ENCODE measurements at regions of chr15 and their contacts with region 1.

Region 1: DNA sequence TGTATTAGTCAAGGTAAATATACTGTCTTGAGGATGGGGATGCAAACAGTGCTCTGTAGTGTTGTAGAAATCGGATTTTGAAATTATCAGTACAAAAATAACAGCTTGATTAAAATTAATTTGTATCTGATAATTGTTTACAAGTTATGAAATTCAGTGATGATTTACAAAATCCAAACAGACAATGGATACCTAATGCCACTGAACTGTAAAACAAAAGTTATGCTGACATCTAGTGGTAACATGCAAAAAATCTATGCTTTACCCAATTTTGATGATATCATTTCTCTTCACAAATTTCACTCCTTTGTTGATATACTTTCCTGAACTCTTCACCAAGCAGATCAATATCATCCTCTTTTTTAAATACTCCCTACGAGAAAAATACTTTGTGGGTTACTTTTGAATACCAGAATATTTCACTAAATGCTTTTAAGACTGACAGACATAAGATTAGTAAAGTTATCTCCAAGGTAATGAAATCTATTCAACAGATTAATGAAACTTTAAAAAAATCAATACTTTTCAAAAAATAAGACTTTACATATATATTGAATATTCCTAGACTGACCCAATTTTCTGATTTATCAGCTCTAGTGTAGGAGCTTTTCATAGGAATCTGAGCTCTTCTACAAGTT is 36.0 kb downstream of the MNS1 start:
- DNase-seq: peak; percentile 21
- H3K4me3 ChIP-seq: no peak overlapping the region; a peak in 1 of 4 replicates
- H3K27ac ChIP-seq: no peak overlapping the region
- H3K4me1 ChIP-seq: no peaks in the 10 kb centered on the region
- H3K27me3 ChIP-seq: no peaks in the 10 kb centered on the region
- CTCF ChIP-seq: peak; percentile 70
- EP300 ChIP-seq: no peak
- RAD21 ChIP-seq: peak; percentile 84

Region 2: DNA sequence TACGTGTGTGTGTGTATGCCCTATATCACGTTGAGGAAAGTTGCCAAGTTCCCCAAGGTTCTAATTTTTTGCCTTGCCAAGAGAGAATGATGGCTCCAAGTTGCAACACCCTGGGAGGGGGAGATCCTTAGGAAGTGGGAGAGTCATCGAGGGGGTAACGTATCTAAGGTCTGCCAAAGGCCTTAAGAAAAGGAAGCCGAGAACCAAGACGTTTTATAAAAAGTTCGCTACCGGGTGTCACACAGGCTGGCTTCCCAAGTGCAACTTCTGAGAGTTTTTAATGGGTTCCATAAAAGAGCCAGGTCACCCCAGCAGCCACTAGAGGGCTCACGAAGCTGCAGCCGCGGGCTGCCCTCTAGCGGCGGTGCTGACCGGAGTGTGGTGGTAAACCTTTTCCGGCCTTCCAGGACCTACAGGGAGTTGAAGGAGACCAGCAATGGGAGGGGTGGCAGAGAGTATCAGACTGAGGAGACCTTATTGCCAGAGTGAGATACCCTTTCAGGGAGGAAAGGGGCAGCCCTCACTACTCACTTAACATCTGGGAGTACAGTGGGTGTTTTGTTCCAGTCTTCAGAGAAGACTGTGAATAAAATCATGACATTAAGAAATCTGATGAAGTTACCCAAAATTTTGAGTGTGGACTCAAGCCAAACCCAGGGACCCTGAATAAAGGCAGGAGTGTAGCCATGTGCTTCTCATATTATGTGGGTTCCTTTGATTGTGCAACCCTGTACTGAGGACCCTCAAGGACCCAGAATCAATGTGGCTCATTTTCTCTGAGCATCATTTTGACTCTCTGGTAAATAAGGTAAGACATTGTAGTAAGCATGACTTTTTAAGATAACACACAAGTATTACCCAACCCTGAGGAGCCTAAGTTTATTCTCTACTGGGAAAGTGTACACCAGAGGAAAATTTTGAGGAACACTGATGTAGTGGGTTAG is 182.8 kb before region 1 on chr15:
- CTCF ChIA-PET with region 1: interaction called, 77 read pairs
- POLR2A ChIA-PET with region 1: no interaction called
- DNase-seq: peak; percentile 75
- H3K4me3 ChIP-seq: peak overlapping the region; percentile 36 to 47
- H3K27ac ChIP-seq: peak overlapping the region; percentile 17 to 68; a peak in 3 of 4 replicates
- H3K4me1 ChIP-seq: peaks cover 11 to 12% of the 10 kb centered on the region in 2 experiments; a peak in 3 of 4 replicates
- H3K27me3 ChIP-seq: no peaks in the 10 kb centered on the region
- CTCF ChIP-seq: peak; percentile 100
- EP300 ChIP-seq: peak in 1 of 2 experiments; percentile 35; a peak in 1 of 4 replicates
- RAD21 ChIP-seq: peak; percentile 80

Region 3: GRCh38 chr15:56440214-56440770 is 11.4 kb after region 1 on chr15:
- CTCF ChIA-PET with region 1: interaction called, 10 read pairs
- POLR2A ChIA-PET with region 1: no interaction called
- DNase-seq: no peak
- H3K4me3 ChIP-seq: no peak overlapping the region
- H3K27ac ChIP-seq: no peak overlapping the region
- H3K4me1 ChIP-seq: no peaks in the 10 kb centered on the region
- H3K27me3 ChIP-seq: no peaks in the 10 kb centered on the region
- CTCF ChIP-seq: no peak
- EP300 ChIP-seq: no peak
- RAD21 ChIP-seq: no peak

Region 4: GRCh38 chr15:56464893-56465520 is 36.1 kb after region 1 on chr15 and contains the start of gene MNS1:
- CTCF ChIA-PET with region 1: interaction called, 10 read pairs
- POLR2A ChIA-PET with region 1: no interaction called
- DNase-seq: peak; percentile 93
- H3K4me3 ChIP-seq: peak within 1 kb of the TSS; percentile 77 to 88
- H3K27ac ChIP-seq: peak within 1 kb of the TSS in 1 of 2 experiments; percentile 58; a peak in 2 of 4 replicates
- H3K4me1 ChIP-seq: peaks cover 0 to 5% of the 10 kb centered on the region in 2 experiments; a peak in 2 of 4 replicates
- H3K27me3 ChIP-seq: no peaks in the 10 kb centered on the region
- CTCF ChIP-seq: no peak
- EP300 ChIP-seq: no peak
- RAD21 ChIP-seq: no peak
- polyA plus RNA-seq, gene MNS1: 0.42 and 0.90 TPM in 2 replicates

Region 5: DNA sequence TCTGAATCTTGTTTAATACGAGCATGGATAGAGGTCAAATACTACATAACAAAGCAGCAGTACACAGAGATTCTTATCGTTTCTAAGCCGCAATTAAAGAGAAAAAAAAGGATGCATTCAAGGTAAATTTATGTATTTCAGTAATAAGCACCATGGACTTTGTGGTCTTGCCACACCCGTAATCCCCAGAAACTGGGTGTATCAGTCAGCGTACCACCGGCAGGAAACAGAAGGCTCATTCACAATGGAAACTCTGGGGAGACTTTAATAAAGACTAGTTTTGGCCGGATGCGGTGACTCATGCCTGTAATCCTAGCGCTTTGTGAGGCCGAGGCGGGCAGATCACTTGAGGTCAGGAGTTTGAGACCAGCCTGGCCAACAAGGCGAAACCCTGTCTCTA is 386.3 kb after region 1 on chr15:
- CTCF ChIA-PET with region 1: no interaction called
- POLR2A ChIA-PET with region 1: no interaction called
- DNase-seq: no peak
- H3K4me3 ChIP-seq: no peak overlapping the region
- H3K27ac ChIP-seq: no peak overlapping the region
- H3K4me1 ChIP-seq: peaks cover 0 to 22% of the 10 kb centered on the region in 2 experiments; a peak in 2 of 4 replicates
- H3K27me3 ChIP-seq: no peaks in the 10 kb centered on the region
- CTCF ChIP-seq: no peak
- EP300 ChIP-seq: no peak
- RAD21 ChIP-seq: no peak